Ascending aorta (tissue), 2 donors: ENCODE measurements at regions of chr10 and their contacts with region 1.

Region 1: GRCh38 chr10:62268399-62269114 is at the start of gene RTKN2:
- DNase-seq: peak; percentile 12 to 79
- H3K4me3 ChIP-seq: peak within 1 kb of the TSS; percentile 70 to 84
- H3K27ac ChIP-seq: no peak within 1 kb of the TSS
- H3K4me1 ChIP-seq: peaks cover 0 to 6% of the 10 kb centered on the region in 2 donors
- H3K27me3 ChIP-seq: no peaks in the 10 kb centered on the region
- CTCF ChIP-seq: no peak
- total RNA-seq, gene RTKN2: not detected

Region 2: DNA sequence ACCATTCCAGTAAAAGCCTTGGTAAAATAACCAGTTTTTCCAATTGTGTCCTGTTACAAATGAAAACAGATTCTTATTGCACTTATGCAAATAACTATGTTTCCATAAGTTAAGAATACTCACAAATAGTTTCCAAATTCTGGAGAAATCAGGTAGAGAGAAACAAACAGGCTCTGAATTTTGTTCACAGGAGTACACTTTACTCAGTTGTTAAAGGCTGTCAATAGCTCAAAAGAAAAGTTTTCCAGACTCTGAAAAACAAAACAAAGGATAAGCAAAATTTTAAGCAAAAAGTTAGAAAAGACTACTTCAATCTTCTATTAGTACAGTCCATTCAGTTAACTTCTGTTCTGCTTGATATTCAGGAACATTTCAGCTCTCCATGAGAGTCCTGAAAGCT is 72.9 kb after region 1 on chr10:
- intact Hi-C with region 1: no loop called
- DNase-seq: no peak
- H3K4me3 ChIP-seq: no peak overlapping the region
- H3K27ac ChIP-seq: no peak overlapping the region
- H3K4me1 ChIP-seq: no peaks in the 10 kb centered on the region
- H3K27me3 ChIP-seq: no peaks in the 10 kb centered on the region
- CTCF ChIP-seq: no peak

Region 3: GRCh38 chr10:62437696-62438095 is 169.1 kb after region 1 on chr10:
- intact Hi-C with region 1: loop called (anchors 10 kb)
- DNase-seq: no peak
- H3K4me3 ChIP-seq: no peak overlapping the region
- H3K27ac ChIP-seq: no peak overlapping the region
- H3K4me1 ChIP-seq: peaks cover 0 to 5% of the 10 kb centered on the region in 2 donors
- H3K27me3 ChIP-seq: no peaks in the 10 kb centered on the region
- CTCF ChIP-seq: peak; percentile 63 to 79 (median 69)